GM12878 (cell line): ENCODE measurements at regions of chr3 and their contacts with region 1.

Region 1: DNA sequence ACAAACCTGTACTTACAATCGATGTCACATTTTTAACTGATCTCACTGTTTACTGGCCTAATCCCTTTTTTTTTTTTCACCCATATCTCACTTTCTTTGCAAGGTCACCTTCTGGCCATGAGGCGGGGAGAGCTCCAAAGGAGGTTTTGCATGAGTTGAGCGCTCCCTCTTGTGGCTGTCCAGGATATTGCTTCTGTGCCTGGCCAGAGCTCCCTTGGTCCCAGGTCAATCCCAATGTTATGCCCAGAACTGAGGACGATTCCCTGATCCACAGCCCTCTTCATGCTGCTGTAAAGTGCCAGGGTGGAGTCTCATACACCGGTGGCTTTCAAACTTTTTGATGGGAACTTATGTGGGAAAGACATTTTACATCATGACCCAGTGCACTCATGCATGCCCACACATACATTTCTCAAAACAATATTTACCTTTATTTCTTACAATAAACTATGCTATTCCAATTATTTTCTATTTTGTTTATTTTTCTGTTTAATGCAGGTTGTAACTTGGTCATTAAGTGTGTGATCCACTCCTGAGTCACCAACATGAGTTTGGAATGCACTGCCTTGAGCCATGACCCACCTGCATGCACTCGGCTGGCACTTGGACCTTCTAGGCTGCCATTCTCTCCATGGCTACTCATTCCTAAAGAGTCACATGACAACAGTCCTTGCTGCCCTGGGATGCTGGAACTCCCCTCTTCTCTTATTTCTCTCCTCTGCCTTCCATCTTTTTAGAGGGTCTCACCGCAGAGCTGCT is 9.6 kb upstream of the SST start:
- DNase-seq: no peak
- ATAC-seq: peak; percentile 97
- H3K4me3 ChIP-seq: no peak overlapping the region
- H3K27ac ChIP-seq: no peak overlapping the region
- H3K4me1 ChIP-seq: no peaks in the 10 kb centered on the region
- H3K27me3 ChIP-seq: no peaks in the 10 kb centered on the region
- CTCF ChIP-seq: peak; percentile 84 to 94 (median 89)
- EP300 ChIP-seq: no peak
- POLR2A ChIP-seq: no peak
- RAD21 ChIP-seq: peak; percentile 91

Region 2: GRCh38 chr3:187616307-187616972 is 63.4 kb before region 1 on chr3:
- CTCF ChIA-PET with region 1: interaction called, 66 read pairs
- POLR2A ChIA-PET with region 1: interaction called, 3 read pairs
- RAD21 ChIA-PET with region 1: interaction called, 26 read pairs
- SMC1A ChIA-PET with region 1: interaction called, 33 read pairs
- in situ Hi-C with region 1: no loop called
- intact Hi-C with region 1: loop called (anchors 1 kb)
- DNase-seq: no peak
- ATAC-seq: peak; percentile 89
- H3K4me3 ChIP-seq: no peak overlapping the region
- H3K27ac ChIP-seq: no peak overlapping the region
- H3K4me1 ChIP-seq: no peaks in the 10 kb centered on the region
- H3K27me3 ChIP-seq: no peaks in the 10 kb centered on the region; a peak in 1 of 4 replicates
- CTCF ChIP-seq: peak; percentile 66 to 69 (median 66)
- EP300 ChIP-seq: no peak
- POLR2A ChIP-seq: no peak
- RAD21 ChIP-seq: peak; percentile 70

Region 3: GRCh38 chr3:187693431-187693830 is 13.6 kb after region 1 on chr3:
- CTCF ChIA-PET with region 1: interaction called, 10 read pairs
- POLR2A ChIA-PET with region 1: no interaction called
- RAD21 ChIA-PET with region 1: no interaction called
- SMC1A ChIA-PET with region 1: interaction called, 4 read pairs
- in situ Hi-C with region 1: no loop called
- intact Hi-C with region 1: no loop called
- DNase-seq: no peak
- ATAC-seq: no peak
- H3K4me3 ChIP-seq: no peak overlapping the region
- H3K27ac ChIP-seq: no peak overlapping the region
- H3K4me1 ChIP-seq: no peaks in the 10 kb centered on the region
- H3K27me3 ChIP-seq: peaks cover 1 to 4% of the 10 kb centered on the region in 2 experiments
- CTCF ChIP-seq: no peak
- EP300 ChIP-seq: no peak
- POLR2A ChIP-seq: no peak
- RAD21 ChIP-seq: no peak

Region 4: GRCh38 chr3:187706971-187707370 is 27.2 kb after region 1 on chr3:
- CTCF ChIA-PET with region 1: interaction called, 5 read pairs
- POLR2A ChIA-PET with region 1: no interaction called
- RAD21 ChIA-PET with region 1: interaction called, 3 read pairs
- SMC1A ChIA-PET with region 1: interaction called, 17 read pairs
- in situ Hi-C with region 1: no loop called
- intact Hi-C with region 1: no loop called
- DNase-seq: no peak
- ATAC-seq: no peak
- H3K4me3 ChIP-seq: no peak overlapping the region
- H3K27ac ChIP-seq: no peak overlapping the region
- H3K4me1 ChIP-seq: no peaks in the 10 kb centered on the region
- H3K27me3 ChIP-seq: peaks cover 0 to 2% of the 10 kb centered on the region in 2 experiments; a peak in 1 of 4 replicates
- CTCF ChIP-seq: no peak
- EP300 ChIP-seq: no peak
- POLR2A ChIP-seq: no peak
- RAD21 ChIP-seq: no peak